WTC11 (cell line): ENCODE measurements at regions of chr19 and their contacts with region 1.

Region 1: GRCh38 chr19:30669329-30670010 is 297.3 kb downstream of the ZNF536 start:
- DNase-seq: peak; percentile 86
- ATAC-seq: peak; percentile 55
- H3K4me3 Mint-ChIP-seq: peak overlapping the region; percentile 52
- H3K27ac Mint-ChIP-seq: no peak overlapping the region
- H3K4me1 Mint-ChIP-seq: peaks cover 14% of the 10 kb centered on the region
- H3K27me3 Mint-ChIP-seq: no peaks in the 10 kb centered on the region; the same call in 1 of the 2 replicates
- CTCF ChIP-seq: peak; percentile 77

Region 2: DNA sequence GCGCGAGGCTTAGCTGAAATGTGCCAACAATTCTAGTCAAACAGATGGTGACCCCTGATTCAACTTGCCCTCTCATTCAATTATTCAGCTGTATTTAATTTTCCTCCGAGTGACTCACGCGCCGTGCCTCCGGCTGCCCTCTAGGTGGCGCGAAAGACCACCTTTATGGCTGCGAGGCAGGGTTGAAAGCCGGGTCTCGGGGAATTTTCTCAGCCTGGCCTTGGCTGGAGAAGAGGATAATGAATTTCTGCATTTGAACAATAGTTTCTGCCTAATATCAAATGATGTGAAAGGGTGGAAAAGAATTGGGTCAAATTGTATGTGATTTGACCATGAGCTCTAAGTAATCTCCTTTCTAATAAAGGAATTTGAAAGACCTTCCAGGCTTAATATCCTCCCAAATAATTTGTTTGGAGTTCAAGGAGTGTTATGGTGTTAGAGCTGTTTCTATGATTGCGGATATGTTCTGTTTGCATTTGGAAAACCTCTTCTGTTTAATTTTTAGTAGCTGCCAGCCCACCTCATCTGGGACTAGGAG is 13.6 kb after region 1 on chr19:
- CTCF ChIA-PET with region 1: interaction called, 25 read pairs
- POLR2A ChIA-PET with region 1: no interaction called
- DNase-seq: peak; percentile 78
- ATAC-seq: peak; percentile 58
- H3K4me3 Mint-ChIP-seq: no peak overlapping the region
- H3K27ac Mint-ChIP-seq: no peak overlapping the region
- H3K4me1 Mint-ChIP-seq: peaks cover 35% of the 10 kb centered on the region
- H3K27me3 Mint-ChIP-seq: no peaks in the 10 kb centered on the region
- CTCF ChIP-seq: peak; percentile 80

Region 3: GRCh38 chr19:30690935-30691818 is 21.7 kb after region 1 on chr19:
- CTCF ChIA-PET with region 1: interaction called, 19 read pairs
- POLR2A ChIA-PET with region 1: no interaction called
- DNase-seq: peak; percentile 38
- ATAC-seq: peak; percentile 42
- H3K4me3 Mint-ChIP-seq: peak overlapping the region; percentile 45
- H3K27ac Mint-ChIP-seq: peak overlapping the region; percentile 92
- H3K4me1 Mint-ChIP-seq: peaks cover 86% of the 10 kb centered on the region
- H3K27me3 Mint-ChIP-seq: no peaks in the 10 kb centered on the region
- CTCF ChIP-seq: no peak

Region 4: DNA sequence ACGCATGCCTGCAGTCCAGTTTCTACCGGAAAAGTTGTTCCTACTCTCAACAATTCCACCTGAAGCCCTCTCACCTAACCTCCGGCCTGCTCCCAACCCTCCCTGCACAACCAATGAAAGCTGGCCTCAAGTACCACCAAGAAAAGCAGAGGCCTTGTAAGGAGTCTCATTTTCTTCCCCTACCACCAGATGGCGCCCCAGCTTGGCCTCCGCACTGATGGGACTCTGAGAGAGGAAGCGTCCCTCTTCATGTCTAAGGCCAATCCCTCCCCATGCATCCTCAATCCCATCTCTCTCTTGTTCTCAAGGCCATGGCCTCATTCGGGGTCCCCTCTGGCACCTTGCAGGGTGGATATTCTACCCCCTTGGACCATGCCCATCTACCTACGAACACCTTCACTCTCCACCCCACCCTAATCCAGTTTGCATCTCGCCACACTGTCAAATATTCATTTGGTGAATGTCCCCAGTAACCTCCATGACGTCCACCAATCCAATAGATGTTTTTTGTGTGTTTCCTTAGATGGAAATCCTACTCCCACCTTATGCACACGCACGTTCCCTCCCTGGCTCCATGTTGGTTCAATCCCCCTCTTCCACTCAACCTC is 115.5 kb after region 1 on chr19:
- CTCF ChIA-PET with region 1: interaction called, 12 read pairs
- POLR2A ChIA-PET with region 1: no interaction called
- DNase-seq: peak; percentile 84
- ATAC-seq: peak; percentile 97
- H3K4me3 Mint-ChIP-seq: no peak overlapping the region
- H3K27ac Mint-ChIP-seq: no peak overlapping the region
- H3K4me1 Mint-ChIP-seq: no peaks in the 10 kb centered on the region
- H3K27me3 Mint-ChIP-seq: no peaks in the 10 kb centered on the region; the same call in 1 of the 2 replicates
- CTCF ChIP-seq: peak; percentile 63